Heart left ventricle (tissue), 16 donors: ENCODE measurements at regions of chr13 and their contacts with region 1.

Region 1: GRCh38 chr13:35712907-35713761 is 236.6 kb upstream of the MAB21L1 start:
- DNase-seq: no peak
- ATAC-seq: no peak
- H3K4me3 ChIP-seq: no peak overlapping the region
- H3K27ac ChIP-seq: no peak overlapping the region
- H3K4me1 ChIP-seq: peaks cover 0 to 25% (median 11%) of the 10 kb centered on the region in 12 donors
- H3K27me3 ChIP-seq: no peaks in the 10 kb centered on the region
- CTCF ChIP-seq: no peak
- POLR2A ChIP-seq: no peak

Region 2: DNA sequence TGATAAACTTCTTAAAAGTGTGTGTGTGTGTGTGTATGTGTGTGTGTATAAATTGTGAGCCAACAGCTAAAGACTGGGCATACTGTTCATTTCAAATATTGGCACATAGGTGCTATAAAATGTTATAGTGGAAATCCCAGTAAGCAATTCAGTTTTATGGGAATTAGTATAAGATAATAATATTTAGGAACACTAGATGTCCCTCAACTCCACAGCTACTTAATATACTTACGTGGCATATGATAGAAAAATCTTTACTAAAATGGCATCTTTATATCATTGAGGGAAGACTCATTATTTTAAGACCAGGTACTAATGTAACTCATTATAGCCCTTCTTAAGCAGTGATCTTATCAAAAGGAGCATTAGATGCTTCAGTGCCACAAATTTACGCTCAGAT is 502.9 kb before region 1 on chr13:
- intact Hi-C with region 1: loop called in 1 of 10 experiments (anchors 10 kb)
- DNase-seq: no peak
- ATAC-seq: no peak
- H3K4me3 ChIP-seq: no peak overlapping the region
- H3K27ac ChIP-seq: no peak overlapping the region
- H3K4me1 ChIP-seq: peaks cover 0 to 3% (median 0%) of the 10 kb centered on the region in 12 donors
- H3K27me3 ChIP-seq: no peaks in the 10 kb centered on the region
- CTCF ChIP-seq: peak in 5 of 12 donors; percentile 7 to 29 (median 26)
- POLR2A ChIP-seq: no peak

Region 3: DNA sequence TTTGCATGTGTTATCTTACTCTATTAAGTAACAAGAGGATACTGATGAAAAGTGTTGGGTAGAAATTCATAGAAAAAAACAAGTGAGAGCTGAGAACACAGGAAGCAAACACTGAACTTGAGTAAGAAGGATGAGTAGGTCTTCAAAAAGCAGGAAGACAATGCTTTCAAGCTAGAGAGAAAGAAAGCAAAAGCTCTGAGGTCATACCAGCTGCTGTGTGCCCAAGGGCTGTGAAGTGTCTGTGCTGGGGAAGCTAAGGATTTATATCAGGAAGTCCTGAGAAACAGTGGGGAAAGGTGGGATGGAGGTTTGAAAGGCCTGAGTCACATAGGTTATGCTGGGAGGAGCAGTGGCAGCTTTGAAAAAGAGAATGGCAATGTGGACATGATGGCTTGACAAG is 91.1 kb before region 1 on chr13:
- intact Hi-C with region 1: loop called in 1 of 10 experiments (anchors 10 kb)
- DNase-seq: no peak
- ATAC-seq: no peak
- H3K4me3 ChIP-seq: no peak overlapping the region
- H3K27ac ChIP-seq: no peak overlapping the region
- H3K4me1 ChIP-seq: no peaks in the 10 kb centered on the region
- H3K27me3 ChIP-seq: no peaks in the 10 kb centered on the region
- CTCF ChIP-seq: no peak
- POLR2A ChIP-seq: no peak

Region 4: GRCh38 chr13:35630551-35631275 is 82.4 kb before region 1 on chr13:
- intact Hi-C with region 1: loop called in 3 of 10 experiments (anchors 10 kb)
- DNase-seq: no peak
- ATAC-seq: peak in 3 of 4 donors; percentile 70 to 82 (median 79)
- H3K4me3 ChIP-seq: no peak overlapping the region
- H3K27ac ChIP-seq: no peak overlapping the region
- H3K4me1 ChIP-seq: no peaks in the 10 kb centered on the region
- H3K27me3 ChIP-seq: no peaks in the 10 kb centered on the region
- CTCF ChIP-seq: peak; percentile 44 to 77 (median 69)
- POLR2A ChIP-seq: no peak